GM10248 (cell line): ENCODE measurements at regions of chr7 and their contacts with region 1.

Region 1: GRCh38 chr7:19284596-19285300 is 139.5 kb upstream of the FERD3L start:
- DNase-seq: no peak
- CTCF ChIP-seq: no peak

Region 2: GRCh38 chr7:19268737-19269136 is 16.0 kb before region 1 on chr7:
- CTCF ChIA-PET with region 1: no interaction called
- POLR2A ChIA-PET with region 1: no interaction called
- DNase-seq: no peak
- CTCF ChIP-seq: no peak

Region 3: GRCh38 chr7:19295376-19295775 is 10.6 kb after region 1 on chr7:
- CTCF ChIA-PET with region 1: interaction called, 12 read pairs
- POLR2A ChIA-PET with region 1: no interaction called
- DNase-seq: no peak
- CTCF ChIP-seq: no peak

Region 4: DNA sequence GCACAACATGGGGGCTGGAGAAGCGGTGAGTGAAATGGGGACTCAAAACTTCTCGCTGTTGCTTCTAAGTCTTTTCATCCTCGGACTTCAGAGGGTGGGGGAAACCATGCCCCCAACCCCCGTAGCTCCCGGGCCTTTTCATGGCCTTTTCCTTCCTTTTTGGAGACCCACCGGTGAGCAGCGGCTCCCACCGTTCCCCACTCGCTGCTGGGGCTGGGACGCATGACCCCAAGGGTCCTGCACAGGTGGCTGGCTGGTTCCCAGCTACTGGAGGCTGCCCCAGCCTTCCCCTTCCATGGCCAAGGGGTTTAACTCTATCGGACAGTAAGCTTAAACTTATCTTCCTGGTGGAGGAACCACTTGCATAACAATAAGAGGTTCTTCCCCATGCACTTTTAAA is 54.8 kb after region 1 on chr7:
- CTCF ChIA-PET with region 1: no interaction called
- POLR2A ChIA-PET with region 1: no interaction called
- DNase-seq: no peak
- CTCF ChIP-seq: no peak